ENCODE measurements at regions of chr20 and their contacts with region 1.

Region 1: GRCh38 chr20:4195499-4195898 is 180.1 kb upstream of the RNF24 start:
- DNase-seq: no peak
- ATAC-seq: no peak
- H3K4me3 ChIP-seq: no peak overlapping the region
- H3K27ac ChIP-seq: no peak overlapping the region
- H3K4me1 ChIP-seq: no peaks in the 10 kb centered on the region
- H3K27me3 ChIP-seq: peaks cover 0 to 3% of the 10 kb centered on the region in 2 experiments; a peak in 1 of 4 replicates
- CTCF ChIP-seq: peak in 1 of 3 experiments; percentile 3; a peak in 1 of 6 replicates
- EP300 ChIP-seq: no peak
- POLR2A ChIP-seq: no peak
- RAD21 ChIP-seq: no peak

Region 2: DNA sequence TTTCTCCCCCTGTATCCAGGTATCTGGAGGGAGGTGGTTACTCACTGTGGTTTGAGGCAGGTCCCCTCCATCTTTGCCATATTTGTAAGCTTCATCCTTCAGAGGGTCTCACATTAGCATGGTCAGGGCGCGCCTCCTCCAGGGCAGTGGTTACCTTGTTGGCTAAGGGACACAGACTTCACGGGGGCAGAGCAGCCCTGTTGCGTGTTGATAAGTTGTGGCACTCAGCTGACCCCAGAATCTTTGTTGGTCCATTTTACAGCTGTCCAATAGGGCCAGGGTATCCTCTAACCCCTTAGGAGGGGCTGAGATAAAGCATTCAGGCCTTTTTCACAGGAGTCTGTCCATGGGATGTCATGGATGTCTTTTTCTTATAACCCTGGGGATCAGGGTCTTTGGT is 90.7 kb before region 1 on chr20:
- CTCF ChIA-PET with region 1: no interaction called
- POLR2A ChIA-PET with region 1: no interaction called
- RAD21 ChIA-PET with region 1: no interaction called
- SMC1A ChIA-PET with region 1: no interaction called
- in situ Hi-C with region 1: no loop called
- intact Hi-C with region 1: no loop called
- DNase-seq: no peak
- ATAC-seq: no peak
- H3K4me3 ChIP-seq: no peak overlapping the region
- H3K27ac ChIP-seq: no peak overlapping the region
- H3K4me1 ChIP-seq: no peaks in the 10 kb centered on the region
- H3K27me3 ChIP-seq: peaks cover 0 to 2% of the 10 kb centered on the region in 2 experiments; a peak in 2 of 4 replicates
- CTCF ChIP-seq: no peak
- EP300 ChIP-seq: no peak
- POLR2A ChIP-seq: no peak
- RAD21 ChIP-seq: no peak

Region 3: DNA sequence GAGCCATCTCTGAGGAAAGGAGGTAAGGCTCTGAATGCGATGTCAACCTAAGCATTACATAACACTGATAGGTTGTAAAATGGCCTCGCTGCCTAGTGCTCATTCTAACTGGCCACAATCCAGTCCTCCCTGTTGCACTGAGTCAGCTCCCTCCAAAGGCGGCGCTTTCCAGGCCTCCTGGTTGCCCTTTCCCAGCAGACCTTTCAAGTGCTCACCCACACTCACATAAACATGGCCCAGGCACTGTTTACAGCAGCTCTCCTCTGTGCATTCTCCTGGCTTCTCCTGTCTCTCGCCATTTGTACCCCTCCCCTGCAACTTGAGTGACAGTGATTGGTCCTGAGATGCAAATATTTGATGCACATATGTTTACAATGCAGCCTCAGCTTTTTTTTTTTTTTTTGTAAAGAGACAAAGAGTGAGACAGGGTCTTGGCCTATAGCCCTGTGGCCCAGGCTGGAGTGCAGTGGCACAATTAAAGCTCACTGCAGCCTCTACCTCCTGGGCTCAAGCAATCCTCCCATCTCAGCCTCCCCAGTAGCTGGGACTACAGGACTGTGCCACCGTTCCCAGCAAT is 489.4 kb after region 1 on chr20:
- CTCF ChIA-PET with region 1: no interaction called
- POLR2A ChIA-PET with region 1: interaction called, 12 read pairs
- RAD21 ChIA-PET with region 1: no interaction called
- SMC1A ChIA-PET with region 1: no interaction called
- in situ Hi-C with region 1: no loop called
- intact Hi-C with region 1: no loop called
- DNase-seq: no peak
- ATAC-seq: no peak
- H3K4me3 ChIP-seq: no peak overlapping the region
- H3K27ac ChIP-seq: no peak overlapping the region
- H3K4me1 ChIP-seq: no peaks in the 10 kb centered on the region
- H3K27me3 ChIP-seq: no peaks in the 10 kb centered on the region; a peak in 3 of 4 replicates
- CTCF ChIP-seq: no peak
- EP300 ChIP-seq: no peak
- POLR2A ChIP-seq: no peak
- RAD21 ChIP-seq: no peak